Activated CD4-positive, alpha-beta memory T cell treated with anti-CD3 and anti-CD28 coated beads, Interleukin-2, amount 10 ng/mL, durations not matched to agents 7 days and 5 days (primary cell): ENCODE measurements at regions of chr10 and their contacts with region 1.

Region 1: GRCh38 chr10:102904346-102904745 is 13.7 kb upstream of the CNNM2 start:
- DNase-seq: no peak
- H3K4me3 Mint-ChIP-seq: no peak overlapping the region
- H3K27ac Mint-ChIP-seq: no peak overlapping the region
- H3K4me1 Mint-ChIP-seq: no peaks in the 10 kb centered on the region
- H3K27me3 Mint-ChIP-seq: no peaks in the 10 kb centered on the region

Region 2: DNA sequence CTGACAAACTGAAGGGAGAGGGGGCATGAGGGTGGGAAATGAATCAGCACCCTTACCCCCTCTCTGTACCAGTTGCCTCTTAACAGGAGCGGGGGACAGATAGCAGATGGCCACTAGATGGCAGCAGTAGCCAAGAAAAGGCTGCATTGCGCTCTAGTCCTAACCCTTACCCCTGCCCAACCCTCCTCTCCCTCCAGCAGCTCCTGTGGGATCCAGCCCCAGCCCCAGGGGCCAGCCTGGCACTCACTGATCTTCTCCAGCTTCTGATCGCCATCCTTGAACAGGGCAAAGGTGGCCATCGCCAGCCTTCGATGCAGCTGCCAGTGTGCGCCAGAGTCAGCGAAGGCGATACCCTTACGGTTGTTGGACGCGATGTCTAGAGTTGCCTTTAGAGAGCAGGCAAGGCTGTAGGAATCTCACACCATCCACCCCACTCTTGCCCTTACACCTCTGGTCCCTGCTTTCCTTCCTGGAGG is 69.3 kb before region 1 on chr10:
- CTCF ChIA-PET with region 1: interaction called, 55 read pairs
- POLR2A ChIA-PET with region 1: interaction called, 4 read pairs
- DNase-seq: peak; percentile 77
- H3K4me3 Mint-ChIP-seq: no peak overlapping the region
- H3K27ac Mint-ChIP-seq: no peak overlapping the region
- H3K4me1 Mint-ChIP-seq: peaks cover 2% of the 10 kb centered on the region
- H3K27me3 Mint-ChIP-seq: peaks cover 16% of the 10 kb centered on the region